ENCODE measurements at regions of chr4 and their contacts with region 1.

Region 1: DNA sequence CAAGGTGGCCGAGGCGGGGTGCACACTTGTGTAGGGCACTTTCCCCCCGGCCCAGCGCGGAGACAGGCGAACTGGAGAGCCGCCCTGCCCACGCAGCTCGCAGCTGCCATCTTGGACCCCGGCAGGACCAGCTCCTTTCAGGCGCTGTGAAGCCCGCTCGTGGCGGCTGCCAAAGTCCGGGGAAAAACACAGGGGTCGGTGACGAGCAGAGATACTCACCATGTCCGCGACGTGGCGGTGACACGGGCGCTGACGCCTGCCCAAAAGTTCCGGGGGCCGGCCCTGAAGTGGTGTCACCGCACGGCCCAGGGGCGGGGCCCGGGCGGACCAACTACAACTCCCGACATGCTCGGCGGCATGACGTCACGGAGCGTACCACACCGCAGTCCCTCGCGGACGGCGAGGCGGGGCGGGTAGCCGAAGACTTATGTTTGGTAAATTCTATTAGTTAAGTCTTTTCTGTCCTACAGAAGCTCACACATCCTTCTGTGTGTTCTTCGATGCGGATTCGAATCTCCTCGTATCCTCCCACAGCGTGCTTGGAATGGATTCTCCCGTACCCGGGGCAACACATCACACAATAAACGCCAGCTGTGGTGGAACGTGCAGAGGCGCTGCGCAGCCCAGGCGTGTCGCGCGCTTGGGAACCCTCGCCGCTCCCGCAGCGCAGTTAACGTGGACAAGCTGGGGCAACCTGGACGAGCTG is at the start of gene UFSP2:
- H3K4me3 Mint-ChIP-seq: peak within 1 kb of the TSS; percentile 79
- H3K27ac Mint-ChIP-seq: peak within 1 kb of the TSS; percentile 94
- H3K4me1 Mint-ChIP-seq: peaks cover 36% of the 10 kb centered on the region
- H3K27me3 Mint-ChIP-seq: peaks cover 28% of the 10 kb centered on the region

Region 2: DNA sequence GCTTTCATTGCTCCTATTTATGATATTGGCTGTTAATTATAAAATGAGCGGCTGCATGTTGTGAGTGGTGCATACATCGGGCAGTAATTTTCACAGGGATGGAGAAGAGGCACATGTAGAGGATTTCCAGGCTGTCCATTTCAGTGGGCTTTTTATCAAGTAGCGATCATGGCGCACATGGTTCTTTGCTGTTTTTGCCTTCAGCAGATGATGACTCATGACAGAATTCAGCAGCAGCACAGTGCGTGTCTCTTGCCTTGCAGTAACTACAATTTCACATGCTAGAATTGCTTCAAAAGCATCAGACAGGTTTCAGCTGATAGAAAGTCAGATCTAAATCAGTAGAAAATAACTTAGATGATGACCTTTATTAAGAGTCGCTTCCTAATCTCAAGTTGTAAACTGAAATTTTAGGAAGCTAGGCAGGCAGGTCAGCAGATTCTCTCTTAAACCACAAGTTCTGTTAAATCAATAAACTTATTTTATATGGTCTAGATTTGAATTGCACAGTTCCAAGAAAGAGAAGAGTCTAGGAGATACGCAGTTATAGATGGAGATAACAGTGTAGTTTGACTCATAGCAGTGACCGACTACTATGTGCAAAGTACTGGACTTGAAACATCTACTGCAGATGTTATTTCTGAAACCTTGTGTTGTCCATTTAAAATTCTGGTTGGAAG is 65.9 kb before region 1 on chr4:
- intact Hi-C with region 1: no loop called
- H3K4me3 Mint-ChIP-seq: no peak overlapping the region
- H3K27ac Mint-ChIP-seq: no peak overlapping the region
- H3K4me1 Mint-ChIP-seq: no peaks in the 10 kb centered on the region
- H3K27me3 Mint-ChIP-seq: no peaks in the 10 kb centered on the region

Region 3: GRCh38 chr4:185411849-185412248 is 14.0 kb before region 1 on chr4:
- intact Hi-C with region 1: loop called (anchors 2 kb)
- H3K4me3 Mint-ChIP-seq: peak overlapping the region; percentile 17
- H3K27ac Mint-ChIP-seq: peak overlapping the region; percentile 81
- H3K4me1 Mint-ChIP-seq: peaks cover 23% of the 10 kb centered on the region
- H3K27me3 Mint-ChIP-seq: no peaks in the 10 kb centered on the region

Region 4: GRCh38 chr4:185464184-185464583 is 38.4 kb after region 1 on chr4:
- intact Hi-C with region 1: no loop called
- H3K4me3 Mint-ChIP-seq: no peak overlapping the region
- H3K27ac Mint-ChIP-seq: no peak overlapping the region
- H3K4me1 Mint-ChIP-seq: no peaks in the 10 kb centered on the region
- H3K27me3 Mint-ChIP-seq: peaks cover 54% of the 10 kb centered on the region